MCF 10A (cell line): ENCODE measurements at regions of chr3 and their contacts with region 1.

Region 1: GRCh38 chr3:142828703-142829305 is 60.1 kb downstream of the PCOLCE2 start:
- DNase-seq: peak; percentile 82
- H3K4me3 Mint-ChIP-seq: no peak overlapping the region
- H3K27ac Mint-ChIP-seq: no peak overlapping the region
- H3K4me1 Mint-ChIP-seq: no peaks in the 10 kb centered on the region
- H3K27me3 Mint-ChIP-seq: no peaks in the 10 kb centered on the region
- CTCF ChIP-seq: peak; percentile 84

Region 2: GRCh38 chr3:142578327-142579223 is 250.2 kb before region 1 on chr3 and contains the start of gene ATR:
- CTCF ChIA-PET with region 1: interaction called, 37 read pairs
- POLR2A ChIA-PET with region 1: interaction called, 5 read pairs
- intact Hi-C with region 1: no loop called
- DNase-seq: peak; percentile 97
- H3K4me3 Mint-ChIP-seq: peak within 1 kb of the TSS; percentile 95
- H3K27ac Mint-ChIP-seq: peak within 1 kb of the TSS; percentile 90
- H3K4me1 Mint-ChIP-seq: peaks cover 29% of the 10 kb centered on the region
- H3K27me3 Mint-ChIP-seq: peaks cover 14% of the 10 kb centered on the region
- CTCF ChIP-seq: no peak
- total RNA-seq, gene ATR: 27.2 and 30.2 TPM in 2 replicates

Region 3: GRCh38 chr3:142808103-142808917 is 20.5 kb before region 1 on chr3:
- CTCF ChIA-PET with region 1: interaction called, 30 read pairs
- POLR2A ChIA-PET with region 1: no interaction called
- intact Hi-C with region 1: no loop called
- DNase-seq: peak; percentile 72
- H3K4me3 Mint-ChIP-seq: no peak overlapping the region
- H3K27ac Mint-ChIP-seq: peak overlapping the region; percentile 25
- H3K4me1 Mint-ChIP-seq: peaks cover 6% of the 10 kb centered on the region
- H3K27me3 Mint-ChIP-seq: no peaks in the 10 kb centered on the region
- CTCF ChIP-seq: no peak

Region 4: DNA sequence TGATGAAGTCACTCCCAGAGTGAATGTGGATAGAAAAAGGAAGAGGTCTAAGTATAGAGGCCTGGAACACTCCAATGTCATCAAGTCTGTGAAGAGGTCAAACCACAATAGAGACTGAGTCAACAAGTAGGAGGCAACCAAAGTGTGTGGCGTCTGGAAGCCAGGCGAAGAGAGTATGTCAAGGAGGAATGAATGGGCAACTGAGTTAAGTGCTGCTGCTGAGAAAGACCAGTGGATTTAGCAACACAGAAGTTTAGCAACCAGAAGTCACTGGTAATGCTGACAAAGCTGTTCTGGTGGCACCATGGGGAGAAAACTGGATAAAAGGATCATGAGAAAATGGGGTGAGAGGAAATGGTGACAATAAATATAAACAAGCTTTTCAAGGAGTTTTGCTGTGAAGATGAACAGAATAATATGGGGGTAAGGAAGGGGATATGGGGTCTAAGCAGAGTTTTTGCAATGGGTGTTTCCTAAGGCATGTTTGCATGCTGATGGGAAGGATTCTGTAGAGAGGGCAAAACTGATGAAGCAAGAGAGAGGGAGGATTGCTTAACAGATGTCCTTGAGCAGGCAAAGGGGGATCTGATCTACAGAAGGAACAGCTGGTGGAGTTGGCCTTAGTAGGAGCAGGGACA is 21.7 kb after region 1 on chr3:
- CTCF ChIA-PET with region 1: interaction called, 65 read pairs
- POLR2A ChIA-PET with region 1: interaction called, 3 read pairs
- intact Hi-C with region 1: no loop called
- DNase-seq: peak; percentile 94
- H3K4me3 Mint-ChIP-seq: no peak overlapping the region
- H3K27ac Mint-ChIP-seq: no peak overlapping the region
- H3K4me1 Mint-ChIP-seq: peaks cover 18% of the 10 kb centered on the region
- H3K27me3 Mint-ChIP-seq: no peaks in the 10 kb centered on the region
- CTCF ChIP-seq: no peak

Region 5: GRCh38 chr3:142904639-142905436 is 76.0 kb after region 1 on chr3:
- CTCF ChIA-PET with region 1: interaction called, 17 read pairs
- POLR2A ChIA-PET with region 1: no interaction called
- intact Hi-C with region 1: loop called (anchors 1 kb)
- DNase-seq: peak; percentile 64
- H3K4me3 Mint-ChIP-seq: no peak overlapping the region
- H3K27ac Mint-ChIP-seq: no peak overlapping the region
- H3K4me1 Mint-ChIP-seq: peaks cover 16% of the 10 kb centered on the region
- H3K27me3 Mint-ChIP-seq: no peaks in the 10 kb centered on the region
- CTCF ChIP-seq: peak; percentile 25

Region 6: DNA sequence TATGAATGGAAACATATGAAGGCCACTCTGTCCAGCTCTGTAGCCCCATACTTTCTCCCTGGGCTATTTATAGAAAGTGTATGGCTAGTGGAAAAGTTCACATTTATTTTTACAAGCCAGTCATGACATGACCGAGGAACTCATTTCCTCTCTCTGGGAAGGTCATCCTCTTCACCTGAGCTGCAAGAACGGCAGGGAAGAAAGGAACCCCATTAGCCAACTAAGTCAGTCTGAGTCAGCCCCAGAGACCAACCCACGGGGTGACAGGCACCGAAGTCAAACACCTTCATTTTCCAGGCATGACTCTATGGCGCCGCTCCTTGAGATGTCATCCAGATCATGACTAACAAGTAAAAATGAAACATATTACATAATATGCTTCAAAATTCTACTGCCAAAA is 129.9 kb after region 1 on chr3:
- CTCF ChIA-PET with region 1: interaction called, 45 read pairs
- POLR2A ChIA-PET with region 1: no interaction called
- intact Hi-C with region 1: no loop called
- DNase-seq: peak; percentile 93
- H3K4me3 Mint-ChIP-seq: no peak overlapping the region
- H3K27ac Mint-ChIP-seq: no peak overlapping the region
- H3K4me1 Mint-ChIP-seq: peaks cover 5% of the 10 kb centered on the region
- H3K27me3 Mint-ChIP-seq: peaks cover 16% of the 10 kb centered on the region
- CTCF ChIP-seq: no peak

Region 7: DNA sequence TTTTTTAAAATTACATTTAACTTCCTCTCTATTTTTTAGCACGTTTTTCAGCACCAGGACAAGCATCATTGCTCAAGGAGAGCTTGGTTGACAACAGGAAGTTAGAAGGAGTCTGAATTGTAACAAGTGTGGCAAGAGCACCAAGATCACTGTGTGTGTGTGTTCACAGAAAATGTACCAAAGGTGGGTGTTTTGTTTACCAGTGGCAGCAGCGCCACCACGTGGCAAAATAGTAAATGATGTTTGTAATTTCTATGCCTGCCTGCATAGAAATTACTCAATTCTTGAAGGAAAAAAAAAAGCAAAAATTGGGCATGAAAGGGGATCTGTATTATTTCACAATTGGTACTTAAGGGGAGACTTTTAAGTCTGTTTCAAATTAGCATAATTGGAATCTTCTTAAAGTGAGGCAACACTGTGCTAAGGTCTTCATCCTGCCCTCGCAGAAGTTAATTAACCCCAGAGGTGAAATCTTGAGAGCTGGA is 165.2 kb after region 1 on chr3:
- CTCF ChIA-PET with region 1: interaction called, 212 read pairs
- POLR2A ChIA-PET with region 1: interaction called, 9 read pairs
- intact Hi-C with region 1: loop called (anchors 1 kb)
- DNase-seq: peak; percentile 85
- H3K4me3 Mint-ChIP-seq: no peak overlapping the region
- H3K27ac Mint-ChIP-seq: no peak overlapping the region
- H3K4me1 Mint-ChIP-seq: no peaks in the 10 kb centered on the region
- H3K27me3 Mint-ChIP-seq: no peaks in the 10 kb centered on the region
- CTCF ChIP-seq: peak; percentile 65